ENCODE measurements at regions of chr6 and their contacts with region 1.

Region 1: GRCh38 chr6:12051861-12052368 is 39.8 kb downstream of the HIVEP1 start:
- DNase-seq: peak in 8 of 9 donors; percentile 46 to 83 (median 75)
- ATAC-seq: peak; percentile 98
- H3K4me3 ChIP-seq: peak overlapping the region; percentile 15
- H3K4me3 Mint-ChIP-seq: peak overlapping the region; percentile 8 to 85 (median 74)
- H3K27ac ChIP-seq: peak overlapping the region; percentile 59
- H3K27ac Mint-ChIP-seq: peak overlapping the region; percentile 70 to 93 (median 88)
- H3K4me1 ChIP-seq: peaks cover 10 to 17% of the 10 kb centered on the region in 2 donors
- H3K4me1 Mint-ChIP-seq: peaks cover 34 to 81% (median 76%) of the 10 kb centered on the region in 7 donors
- H3K27me3 ChIP-seq: no peaks in the 10 kb centered on the region
- H3K27me3 Mint-ChIP-seq: no peaks in the 10 kb centered on the region

Region 2: DNA sequence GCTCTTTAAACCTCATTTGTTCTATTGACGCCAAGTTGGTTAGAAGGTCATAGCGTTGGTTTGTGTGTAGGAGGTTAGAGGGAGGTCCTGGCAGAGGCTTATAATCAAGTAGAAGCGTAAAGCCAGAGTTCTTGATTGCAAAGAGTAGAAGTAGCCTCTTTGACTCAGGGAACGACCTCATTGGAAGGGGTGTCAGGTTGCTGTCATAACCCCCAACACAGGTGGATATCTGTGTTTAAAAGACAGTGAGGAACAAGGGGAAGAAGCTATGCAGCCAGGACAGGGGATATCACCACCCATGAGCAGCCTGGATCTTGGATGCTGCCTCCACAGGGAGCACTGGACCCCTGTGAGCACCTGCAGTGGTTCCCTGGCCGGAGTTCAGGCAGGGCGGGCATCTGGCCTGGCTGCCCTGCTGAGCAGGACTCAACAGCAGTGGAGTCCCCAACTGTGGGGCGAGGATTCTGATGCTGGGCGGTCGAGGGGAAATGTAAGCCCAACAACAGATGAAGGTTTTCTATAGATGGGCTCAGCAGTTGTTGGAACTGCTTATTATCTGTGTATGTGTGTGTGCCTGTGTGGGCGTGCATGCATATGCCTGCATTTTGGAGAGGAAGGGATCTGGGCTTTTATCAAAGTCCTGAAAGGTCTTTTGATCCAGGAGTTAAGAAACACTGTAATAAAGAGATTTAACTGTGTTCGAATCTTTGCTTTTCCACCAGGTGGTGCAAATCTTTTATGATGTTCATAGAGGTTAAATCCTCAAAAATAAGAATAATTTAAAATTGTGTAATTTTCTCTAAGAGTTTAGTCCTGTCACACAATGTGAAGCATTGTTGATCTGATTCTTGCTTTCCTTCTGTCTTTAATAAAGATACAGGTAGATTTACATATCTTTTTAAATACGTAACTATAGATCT is 12.1 kb before region 1 on chr6:
- CTCF ChIA-PET with region 1: no interaction called
- POLR2A ChIA-PET with region 1: no interaction called
- intact Hi-C with region 1: loop called in 1 of 2 experiments (anchors 2 kb)
- DNase-seq: no peak
- ATAC-seq: no peak
- H3K4me3 ChIP-seq: no peak overlapping the region
- H3K4me3 Mint-ChIP-seq: peak overlapping the region in 3 of 10 donors; percentile 29 to 74 (median 73)
- H3K27ac ChIP-seq: no peak overlapping the region
- H3K27ac Mint-ChIP-seq: peak overlapping the region; percentile 30 to 83 (median 59)
- H3K4me1 ChIP-seq: peaks cover 0 to 22% of the 10 kb centered on the region in 2 donors
- H3K4me1 Mint-ChIP-seq: peaks cover 45 to 80% (median 71%) of the 10 kb centered on the region in 7 donors
- H3K27me3 ChIP-seq: peaks cover 0 to 3% of the 10 kb centered on the region in 2 donors
- H3K27me3 Mint-ChIP-seq: no peaks in the 10 kb centered on the region

Region 3: GRCh38 chr6:12119085-12119588 is 67.2 kb after region 1 on chr6:
- CTCF ChIA-PET with region 1: no interaction called
- POLR2A ChIA-PET with region 1: no interaction called
- intact Hi-C with region 1: loop called in 1 of 2 experiments (anchors 1 kb)
- DNase-seq: peak in 8 of 9 donors; percentile 16 to 76 (median 48)
- ATAC-seq: peak; percentile 92
- H3K4me3 ChIP-seq: no peak overlapping the region
- H3K4me3 Mint-ChIP-seq: peak overlapping the region in 8 of 10 donors; percentile 1 to 56 (median 35)
- H3K27ac ChIP-seq: no peak overlapping the region
- H3K27ac Mint-ChIP-seq: peak overlapping the region; percentile 28 to 85 (median 68)
- H3K4me1 ChIP-seq: peaks cover 9 to 21% of the 10 kb centered on the region in 2 donors
- H3K4me1 Mint-ChIP-seq: peaks cover 28 to 81% (median 70%) of the 10 kb centered on the region in 7 donors
- H3K27me3 ChIP-seq: no peaks in the 10 kb centered on the region
- H3K27me3 Mint-ChIP-seq: no peaks in the 10 kb centered on the region

Measured in naive thymus-derived CD4-positive, alpha-beta T cell (primary cell).